H1 (cell line): ENCODE measurements at regions of chr10 and their contacts with region 1.

Region 1: GRCh38 chr10:50624866-50625692 is 1.3 kb upstream of the SGMS1 start:
- DNase-seq: peak in 1 of 2 experiments; percentile 36
- H3K4me3 ChIP-seq: peak overlapping the region; percentile 65 to 88 (median 76)
- H3K27ac ChIP-seq: peak overlapping the region; percentile 97
- H3K4me1 ChIP-seq: peaks cover 6 to 26% (median 15%) of the 10 kb centered on the region in 4 experiments
- H3K27me3 ChIP-seq: no peaks in the 10 kb centered on the region; a peak in 1 of 7 replicates
- CTCF ChIP-seq: peak in 2 of 3 experiments; percentile 9 to 39; a peak in 3 of 4 replicates
- EP300 ChIP-seq: no peak
- POLR2A ChIP-seq: peak in 1 of 2 experiments; percentile 87; a peak in 1 of 3 replicates
- RAD21 ChIP-seq: peak; percentile 12 to 29; a peak in 1 of 4 replicates

Region 2: DNA sequence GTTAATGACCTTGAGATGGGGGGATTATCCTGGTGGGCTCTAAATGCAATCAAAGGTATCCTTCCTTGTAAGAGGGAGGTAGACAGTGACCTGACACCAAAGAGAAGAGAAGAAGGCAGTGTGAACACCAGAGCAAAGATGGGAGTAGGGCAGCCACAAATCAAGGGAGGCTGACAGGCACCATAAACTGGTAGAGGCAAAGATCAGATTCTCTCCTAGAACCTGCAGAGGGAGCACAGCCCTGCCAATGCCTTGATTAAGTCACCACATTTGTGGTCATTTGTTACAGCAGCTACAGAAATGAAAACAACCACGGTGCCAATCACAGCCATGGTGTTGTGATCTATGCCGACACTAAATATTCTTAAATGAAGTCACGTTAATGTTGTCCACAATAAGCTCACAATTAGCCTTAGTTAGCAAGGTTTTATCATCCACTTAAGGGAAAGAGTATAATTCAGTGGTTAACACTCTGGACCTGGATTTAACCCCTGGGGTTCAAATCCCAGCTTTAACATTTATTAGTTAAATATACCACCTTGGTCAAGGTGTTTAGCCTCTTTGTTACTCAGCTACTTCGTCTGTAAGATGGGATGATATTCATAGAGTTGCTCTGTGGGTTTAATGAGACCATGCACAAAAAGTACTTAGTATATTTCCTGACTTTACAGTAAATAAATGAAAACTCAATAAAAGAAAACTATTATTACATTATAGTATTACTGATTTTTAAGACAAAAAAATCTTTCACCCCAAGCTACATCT is 72.1 kb before region 1 on chr10:
- CTCF ChIA-PET with region 1: interaction called, 17 read pairs
- POLR2A ChIA-PET with region 1: interaction called, 5 read pairs
- DNase-seq: no peak
- H3K4me3 ChIP-seq: no peak overlapping the region
- H3K27ac ChIP-seq: no peak overlapping the region
- H3K4me1 ChIP-seq: peaks cover 4 to 10% (median 5%) of the 10 kb centered on the region in 4 experiments; a peak in 5 of 7 replicates
- H3K27me3 ChIP-seq: no peaks in the 10 kb centered on the region
- CTCF ChIP-seq: peak in 2 of 3 experiments; percentile 49 to 65; a peak in 3 of 4 replicates
- EP300 ChIP-seq: no peak
- POLR2A ChIP-seq: no peak
- RAD21 ChIP-seq: peak; percentile 36 to 52; a peak in 3 of 4 replicates

Region 3: GRCh38 chr10:50577681-50578350 is 47.3 kb before region 1 on chr10:
- CTCF ChIA-PET with region 1: interaction called, 13 read pairs
- POLR2A ChIA-PET with region 1: interaction called, 3 read pairs
- DNase-seq: no peak
- H3K4me3 ChIP-seq: no peak overlapping the region
- H3K27ac ChIP-seq: no peak overlapping the region
- H3K4me1 ChIP-seq: peaks cover 4 to 8% (median 5%) of the 10 kb centered on the region in 4 experiments; a peak in 4 of 7 replicates
- H3K27me3 ChIP-seq: no peaks in the 10 kb centered on the region
- CTCF ChIP-seq: no peak
- EP300 ChIP-seq: no peak
- POLR2A ChIP-seq: no peak
- RAD21 ChIP-seq: no peak

Region 4: GRCh38 chr10:50604049-50604640 is 20.9 kb before region 1 on chr10:
- CTCF ChIA-PET with region 1: interaction called, 15 read pairs
- POLR2A ChIA-PET with region 1: interaction called, 5 read pairs
- DNase-seq: no peak
- H3K4me3 ChIP-seq: no peak overlapping the region
- H3K27ac ChIP-seq: no peak overlapping the region
- H3K4me1 ChIP-seq: peaks cover 0 to 5% (median 0%) of the 10 kb centered on the region in 4 experiments; a peak in 4 of 7 replicates
- H3K27me3 ChIP-seq: no peaks in the 10 kb centered on the region
- CTCF ChIP-seq: no peak
- EP300 ChIP-seq: no peak
- POLR2A ChIP-seq: no peak
- RAD21 ChIP-seq: no peak

Region 5: GRCh38 chr10:50614444-50615137 is 10.5 kb before region 1 on chr10:
- CTCF ChIA-PET with region 1: interaction called, 19 read pairs
- POLR2A ChIA-PET with region 1: interaction called, 6 read pairs
- DNase-seq: peak in 1 of 2 experiments; percentile 66
- H3K4me3 ChIP-seq: no peak overlapping the region
- H3K27ac ChIP-seq: no peak overlapping the region
- H3K4me1 ChIP-seq: peaks cover 6 to 30% (median 16%) of the 10 kb centered on the region in 4 experiments
- H3K27me3 ChIP-seq: no peaks in the 10 kb centered on the region
- CTCF ChIP-seq: peak in 2 of 3 experiments; percentile 46 to 71; a peak in 3 of 4 replicates
- EP300 ChIP-seq: no peak
- POLR2A ChIP-seq: no peak
- RAD21 ChIP-seq: peak; percentile 52 to 65

Region 6: GRCh38 chr10:50636618-50637579 is 11.8 kb after region 1 on chr10:
- CTCF ChIA-PET with region 1: interaction called, 5 read pairs
- POLR2A ChIA-PET with region 1: interaction called, 21 read pairs
- DNase-seq: no peak
- H3K4me3 ChIP-seq: no peak overlapping the region
- H3K27ac ChIP-seq: no peak overlapping the region
- H3K4me1 ChIP-seq: no peaks in the 10 kb centered on the region; a peak in 2 of 7 replicates
- H3K27me3 ChIP-seq: peaks cover 0 to 1% (median 0%) of the 10 kb centered on the region in 4 experiments; a peak in 1 of 7 replicates
- CTCF ChIP-seq: no peak
- EP300 ChIP-seq: no peak
- POLR2A ChIP-seq: no peak
- RAD21 ChIP-seq: no peak

Region 7: DNA sequence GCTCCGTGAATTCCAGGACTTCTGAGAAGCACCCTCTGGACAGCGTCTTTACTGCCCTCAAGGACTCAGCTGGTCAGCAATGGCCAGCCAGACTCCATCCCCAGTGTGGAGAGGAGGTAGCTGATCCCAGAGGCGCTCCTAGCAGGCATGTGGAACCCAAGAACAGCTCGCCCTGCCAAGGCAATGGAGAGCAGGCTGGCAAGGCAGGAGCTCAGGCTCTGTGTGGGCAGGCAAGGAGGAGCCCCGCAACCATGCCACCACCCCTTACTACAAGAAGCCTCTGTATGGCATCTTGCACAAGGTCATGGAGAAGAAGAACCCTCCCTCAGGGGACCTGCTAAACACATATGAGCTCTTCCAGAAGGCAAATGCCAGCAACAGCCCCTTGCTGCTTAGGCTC is 33.1 kb after region 1 on chr10:
- CTCF ChIA-PET with region 1: interaction called, 10 read pairs
- POLR2A ChIA-PET with region 1: interaction called, 5 read pairs
- DNase-seq: no peak
- H3K4me3 ChIP-seq: no peak overlapping the region
- H3K27ac ChIP-seq: no peak overlapping the region
- H3K4me1 ChIP-seq: no peaks in the 10 kb centered on the region
- H3K27me3 ChIP-seq: peaks cover 0 to 1% (median 0%) of the 10 kb centered on the region in 4 experiments; a peak in 1 of 7 replicates
- CTCF ChIP-seq: no peak
- EP300 ChIP-seq: no peak
- POLR2A ChIP-seq: no peak
- RAD21 ChIP-seq: no peak

Region 8: GRCh38 chr10:50929670-50930069 is 304.6 kb after region 1 on chr10:
- CTCF ChIA-PET with region 1: no interaction called
- POLR2A ChIA-PET with region 1: no interaction called
- DNase-seq: no peak
- H3K4me3 ChIP-seq: no peak overlapping the region
- H3K27ac ChIP-seq: no peak overlapping the region
- H3K4me1 ChIP-seq: no peaks in the 10 kb centered on the region
- H3K27me3 ChIP-seq: no peaks in the 10 kb centered on the region
- CTCF ChIP-seq: no peak
- EP300 ChIP-seq: no peak
- POLR2A ChIP-seq: no peak
- RAD21 ChIP-seq: no peak